CD4-positive, alpha-beta memory T cell (primary cell): ENCODE measurements at regions of chr19 and their contacts with region 1.

Region 1: GRCh38 chr19:57240311-57241090 is at the start of gene ZNF805:
- DNase-seq: peak; percentile 94 to 96 (median 96)
- H3K4me3 ChIP-seq: peak within 1 kb of the TSS; percentile 67 to 71
- H3K4me3 Mint-ChIP-seq: peak within 1 kb of the TSS; percentile 89 to 96 (median 94)
- H3K27ac ChIP-seq: peak within 1 kb of the TSS; percentile 88
- H3K27ac Mint-ChIP-seq: peak within 1 kb of the TSS; percentile 94 to 98 (median 96)
- H3K4me1 ChIP-seq: peaks cover 32% of the 10 kb centered on the region
- H3K4me1 Mint-ChIP-seq: peaks cover 15 to 51% (median 36%) of the 10 kb centered on the region in 4 donors
- H3K27me3 ChIP-seq: no peaks in the 10 kb centered on the region
- H3K27me3 Mint-ChIP-seq: no peaks in the 10 kb centered on the region
- total RNA-seq, gene ZNF805: 19.7 to 21.6 TPM

Region 2: DNA sequence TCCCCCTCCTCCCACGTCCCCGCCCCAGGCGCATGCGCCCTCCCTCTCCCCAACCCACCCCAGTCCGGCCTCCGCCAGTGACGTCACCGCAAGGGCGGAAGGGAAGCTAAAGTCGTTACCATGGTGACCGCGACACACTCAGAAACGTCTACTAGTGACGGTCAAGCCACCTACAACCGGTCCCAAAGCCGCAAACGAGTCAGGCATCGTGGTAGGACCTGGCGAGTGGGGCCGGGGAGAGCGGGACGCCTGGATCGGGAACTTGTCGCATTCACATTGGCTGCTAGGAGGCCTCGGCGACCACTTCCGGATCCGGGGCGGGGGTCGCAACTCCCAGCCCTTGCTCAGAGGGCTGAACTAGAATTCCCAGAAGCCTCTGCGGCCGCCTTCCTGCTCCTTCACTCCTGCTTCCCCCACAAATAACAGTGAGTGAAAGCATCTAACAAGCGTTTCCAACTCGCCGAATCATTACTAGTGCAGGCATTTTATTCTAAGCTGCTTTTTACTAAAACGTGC is 925.9 kb before region 1 on chr19 and contains the start of gene ZSCAN5A:
- CTCF ChIA-PET with region 1: no interaction called
- POLR2A ChIA-PET with region 1: no interaction called
- intact Hi-C with region 1: loop called (anchors 2 kb)
- DNase-seq: peak; percentile 98 to 100 (median 99)
- H3K4me3 ChIP-seq: peak within 1 kb of the TSS; percentile 54 to 98
- H3K4me3 Mint-ChIP-seq: peak within 1 kb of the TSS; percentile 88 to 96 (median 92)
- H3K27ac ChIP-seq: peak within 1 kb of the TSS; percentile 95
- H3K27ac Mint-ChIP-seq: peak within 1 kb of the TSS; percentile 96 to 99 (median 98)
- H3K4me1 ChIP-seq: peaks cover 14% of the 10 kb centered on the region
- H3K4me1 Mint-ChIP-seq: peaks cover 6 to 32% (median 21%) of the 10 kb centered on the region in 4 donors
- H3K27me3 ChIP-seq: no peaks in the 10 kb centered on the region
- H3K27me3 Mint-ChIP-seq: no peaks in the 10 kb centered on the region
- total RNA-seq, gene ZSCAN5A: 12.2 to 14.6 TPM

Region 3: DNA sequence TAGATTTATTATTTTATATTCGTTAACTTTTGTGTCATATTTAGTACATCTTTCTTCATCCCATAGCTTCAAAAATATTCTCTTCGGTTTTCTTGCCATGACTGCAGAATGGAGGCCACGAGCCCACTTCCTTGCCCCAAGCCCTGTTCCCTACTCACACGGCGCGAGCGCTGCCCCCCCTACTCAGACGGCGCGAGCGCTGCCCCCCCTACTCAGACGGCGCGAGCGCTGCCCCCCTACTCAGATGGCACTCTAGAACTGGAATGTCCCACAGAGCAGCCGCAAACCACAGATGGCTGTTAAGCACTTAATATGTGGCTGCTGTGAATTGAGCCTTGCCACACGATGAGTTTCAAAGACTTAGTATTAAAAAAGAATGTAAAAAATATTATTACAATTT is 297.7 kb before region 1 on chr19:
- CTCF ChIA-PET with region 1: no interaction called
- POLR2A ChIA-PET with region 1: no interaction called
- intact Hi-C with region 1: no loop called
- DNase-seq: no peak
- H3K4me3 ChIP-seq: no peak overlapping the region
- H3K4me3 Mint-ChIP-seq: no peak overlapping the region
- H3K27ac ChIP-seq: no peak overlapping the region
- H3K27ac Mint-ChIP-seq: no peak overlapping the region
- H3K4me1 ChIP-seq: no peaks in the 10 kb centered on the region
- H3K4me1 Mint-ChIP-seq: no peaks in the 10 kb centered on the region
- H3K27me3 ChIP-seq: no peaks in the 10 kb centered on the region
- H3K27me3 Mint-ChIP-seq: peaks cover 0 to 3% of the 10 kb centered on the region in 2 donors

Region 4: DNA sequence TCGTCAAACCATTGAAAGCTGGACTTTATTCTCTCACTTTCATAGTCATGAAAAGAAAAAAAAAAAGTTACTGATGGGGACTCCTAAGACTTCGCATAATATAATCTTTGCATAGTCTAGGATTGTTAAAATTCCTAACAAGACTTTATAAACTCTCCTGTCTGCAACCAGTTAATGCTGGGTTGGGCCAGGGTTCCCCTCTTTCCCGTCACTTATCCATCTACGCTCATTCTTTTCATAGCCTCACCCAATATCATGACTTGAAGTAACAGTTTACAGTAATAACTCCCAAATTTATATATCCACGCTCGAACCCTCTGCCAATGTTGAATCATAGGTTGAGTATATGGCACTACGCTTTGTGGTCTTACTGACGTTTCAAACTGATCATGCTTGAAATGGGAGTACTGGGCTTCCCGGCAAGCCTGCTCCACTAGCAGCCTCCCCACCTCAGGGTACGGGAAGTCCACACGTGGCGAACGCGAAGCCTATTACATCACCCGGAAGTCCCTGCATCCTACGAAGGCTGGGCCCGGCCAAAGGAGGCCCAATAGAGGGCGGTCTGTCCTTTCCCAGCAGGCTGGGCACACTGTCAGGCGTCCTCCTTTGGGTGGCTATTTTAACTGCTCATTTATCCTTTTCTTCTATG is 39.0 kb after region 1 on chr19:
- CTCF ChIA-PET with region 1: interaction called, 3 read pairs
- POLR2A ChIA-PET with region 1: interaction called, 20 read pairs
- intact Hi-C with region 1: loop called (anchors 1 kb)
- DNase-seq: peak in 4 of 5 donors; percentile 77 to 85 (median 84)
- H3K4me3 ChIP-seq: peak overlapping the region; percentile 68 to 74
- H3K4me3 Mint-ChIP-seq: peak overlapping the region in 1 of 8 donors; percentile 20
- H3K27ac ChIP-seq: peak overlapping the region; percentile 100
- H3K27ac Mint-ChIP-seq: peak overlapping the region in 1 of 7 donors; percentile 74
- H3K4me1 ChIP-seq: peaks cover 38% of the 10 kb centered on the region
- H3K4me1 Mint-ChIP-seq: peaks cover 0 to 33% (median 23%) of the 10 kb centered on the region in 4 donors
- H3K27me3 ChIP-seq: no peaks in the 10 kb centered on the region
- H3K27me3 Mint-ChIP-seq: no peaks in the 10 kb centered on the region

Region 5: DNA sequence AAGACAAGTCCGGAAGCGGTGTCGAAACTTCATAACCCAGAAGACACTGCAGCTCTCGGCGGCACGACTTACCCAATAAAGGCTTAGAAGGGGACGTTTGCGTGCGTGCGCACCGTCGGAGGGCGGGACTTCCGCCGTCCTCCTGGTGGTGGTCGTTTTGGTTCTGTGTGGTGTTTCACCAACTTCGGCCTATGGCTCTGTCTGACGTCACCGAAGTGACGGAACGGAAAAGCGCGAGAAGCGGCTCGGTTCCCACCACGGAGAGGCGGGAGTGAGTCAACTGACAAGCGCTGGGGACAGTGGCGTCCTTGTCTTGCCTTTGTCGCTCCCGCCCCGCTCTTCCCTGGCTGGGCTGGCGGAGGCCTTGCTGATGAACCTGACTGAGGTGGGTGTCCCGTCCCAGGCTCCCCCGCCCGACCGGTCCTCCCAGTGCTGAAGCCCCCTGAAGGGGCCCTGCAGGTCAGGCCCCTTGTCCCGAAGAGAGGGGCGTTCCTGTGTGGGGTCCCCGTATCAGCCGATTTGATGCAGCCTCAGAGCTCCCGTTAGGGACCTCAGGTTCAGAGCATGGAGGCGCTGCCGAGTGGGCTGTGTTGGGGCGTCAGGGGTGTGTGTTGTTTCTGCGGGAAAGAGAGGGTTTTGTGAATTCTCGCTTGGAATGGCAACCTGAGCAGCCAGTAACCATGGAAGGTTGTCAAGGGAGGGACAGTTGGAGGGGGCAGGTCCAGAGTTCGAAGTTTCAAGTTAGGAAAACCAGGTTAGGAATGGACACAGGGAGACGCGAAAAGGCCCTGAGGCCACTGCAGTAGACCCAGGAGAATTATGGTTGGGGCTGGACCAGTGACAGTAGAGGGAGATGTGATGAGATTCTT is 149.5 kb after region 1 on chr19 and contains the start of gene ZNF548:
- CTCF ChIA-PET with region 1: no interaction called
- POLR2A ChIA-PET with region 1: no interaction called
- intact Hi-C with region 1: loop called (anchors 1 kb)
- DNase-seq: peak; percentile 93 to 100 (median 95)
- H3K4me3 ChIP-seq: peak within 1 kb of the TSS; percentile 52 to 62
- H3K4me3 Mint-ChIP-seq: peak within 1 kb of the TSS; percentile 97 to 99 (median 98)
- H3K27ac ChIP-seq: peak within 1 kb of the TSS; percentile 95
- H3K27ac Mint-ChIP-seq: peak within 1 kb of the TSS; percentile 98 to 100 (median 99)
- H3K4me1 ChIP-seq: peaks cover 22% of the 10 kb centered on the region
- H3K4me1 Mint-ChIP-seq: peaks cover 22 to 41% (median 31%) of the 10 kb centered on the region in 4 donors
- H3K27me3 ChIP-seq: no peaks in the 10 kb centered on the region
- H3K27me3 Mint-ChIP-seq: peaks cover 0 to 3% of the 10 kb centered on the region in 2 donors
- total RNA-seq, gene ZNF548: 85.4 to 103 TPM